ENCODE measurements at regions of chr6 and their contacts with region 1.

Region 1: GRCh38 chr6:169800668-169801395 is 49.4 kb downstream of the ERMARD start:
- DNase-seq: peak; percentile 45
- H3K4me3 ChIP-seq: no peak overlapping the region
- H3K27ac ChIP-seq: peak overlapping the region; percentile 39
- H3K27me3 ChIP-seq: peaks cover 8% of the 10 kb centered on the region
- CTCF ChIP-seq: no peak

Region 2: GRCh38 chr6:169751242-169752073 is 49.4 kb before region 1 on chr6 and contains the starts of genes DYNLT2 and ERMARD:
- CTCF ChIA-PET with region 1: no interaction called
- POLR2A ChIA-PET with region 1: interaction called, 10 read pairs
- DNase-seq: peak; percentile 80
- H3K4me3 ChIP-seq: peak within 1 kb of the TSS; percentile 79
- H3K27ac ChIP-seq: peak within 1 kb of the TSS; percentile 89
- H3K27me3 ChIP-seq: no peaks in the 10 kb centered on the region
- CTCF ChIP-seq: peak; percentile 32
- polyA plus RNA-seq, gene DYNLT2: 0.46 and 0.64 TPM in 2 replicates
- polyA plus RNA-seq, gene ERMARD: 24.8 and 26.8 TPM in 2 replicates

Region 3: GRCh38 chr6:169774347-169774746 is 26.5 kb before region 1 on chr6:
- CTCF ChIA-PET with region 1: no interaction called
- POLR2A ChIA-PET with region 1: interaction called, 12 read pairs
- DNase-seq: no peak
- H3K4me3 ChIP-seq: no peak overlapping the region
- H3K27ac ChIP-seq: no peak overlapping the region
- H3K27me3 ChIP-seq: no peaks in the 10 kb centered on the region
- CTCF ChIP-seq: no peak

Region 4: GRCh38 chr6:169824021-169824420 is 23.2 kb after region 1 on chr6:
- CTCF ChIA-PET with region 1: no interaction called
- POLR2A ChIA-PET with region 1: no interaction called
- DNase-seq: no peak
- H3K4me3 ChIP-seq: no peak overlapping the region
- H3K27ac ChIP-seq: no peak overlapping the region
- H3K27me3 ChIP-seq: no peaks in the 10 kb centered on the region
- CTCF ChIP-seq: no peak

Region 5: GRCh38 chr6:170022971-170023619 is 222.3 kb after region 1 on chr6:
- CTCF ChIA-PET with region 1: no interaction called
- POLR2A ChIA-PET with region 1: no interaction called
- DNase-seq: no peak
- H3K4me3 ChIP-seq: no peak overlapping the region
- H3K27ac ChIP-seq: no peak overlapping the region
- H3K27me3 ChIP-seq: no peaks in the 10 kb centered on the region
- CTCF ChIP-seq: no peak

Region 6: DNA sequence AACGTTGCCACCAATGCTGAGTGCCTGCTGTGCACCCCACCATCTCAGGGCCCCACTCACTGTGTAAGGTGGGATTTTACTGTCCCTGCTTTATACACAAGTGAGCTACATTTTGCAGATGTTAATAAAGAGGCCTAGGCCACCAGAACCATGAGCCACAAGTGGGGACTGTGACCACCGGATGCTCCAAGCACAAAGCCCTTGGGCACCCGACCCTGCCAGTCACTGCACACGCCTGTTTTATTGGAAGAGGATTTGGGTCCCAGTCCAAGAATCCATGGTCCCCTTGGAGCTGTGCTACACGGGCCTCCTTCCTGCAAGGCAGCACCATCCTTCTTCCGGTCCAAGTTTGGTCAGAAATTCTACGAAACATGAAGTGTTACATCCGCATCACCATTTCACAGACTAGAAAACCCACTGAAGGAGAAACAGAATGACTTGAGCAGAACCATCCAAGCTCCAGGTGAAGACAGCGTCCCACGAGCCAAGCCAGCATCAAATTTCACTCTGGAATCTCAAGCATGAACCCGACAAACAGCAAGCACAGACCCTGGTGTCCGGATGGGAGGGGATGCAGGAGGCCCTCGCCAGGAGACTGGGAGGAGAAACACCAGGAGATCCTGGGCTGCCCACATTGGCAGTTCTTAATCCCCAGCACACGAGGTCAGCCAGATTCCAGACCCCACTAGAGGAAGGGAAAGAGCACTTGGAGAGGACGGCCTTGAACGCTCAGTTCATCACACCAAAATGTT is 263.2 kb after region 1 on chr6:
- CTCF ChIA-PET with region 1: no interaction called
- POLR2A ChIA-PET with region 1: no interaction called
- DNase-seq: no peak
- H3K4me3 ChIP-seq: no peak overlapping the region
- H3K27ac ChIP-seq: no peak overlapping the region
- H3K27me3 ChIP-seq: no peaks in the 10 kb centered on the region
- CTCF ChIP-seq: no peak